PC-3 (cell line): ENCODE measurements at regions of chr3 and their contacts with region 1.

Region 1: GRCh38 chr3:11643605-11644087 is at the start of gene VGLL4:
- DNase-seq: peak; percentile 86
- ATAC-seq: peak; percentile 81
- H3K4me3 ChIP-seq: peak within 1 kb of the TSS; percentile 84
- H3K27ac ChIP-seq: peak within 1 kb of the TSS; percentile 74
- H3K4me1 ChIP-seq: peaks cover 7% of the 10 kb centered on the region; the same call in 1 of the 2 replicates
- H3K27me3 ChIP-seq: no peaks in the 10 kb centered on the region
- CTCF ChIP-seq: no peak
- total RNA-seq, gene VGLL4: 40.5 and 46.3 TPM in 2 replicates

Region 2: DNA sequence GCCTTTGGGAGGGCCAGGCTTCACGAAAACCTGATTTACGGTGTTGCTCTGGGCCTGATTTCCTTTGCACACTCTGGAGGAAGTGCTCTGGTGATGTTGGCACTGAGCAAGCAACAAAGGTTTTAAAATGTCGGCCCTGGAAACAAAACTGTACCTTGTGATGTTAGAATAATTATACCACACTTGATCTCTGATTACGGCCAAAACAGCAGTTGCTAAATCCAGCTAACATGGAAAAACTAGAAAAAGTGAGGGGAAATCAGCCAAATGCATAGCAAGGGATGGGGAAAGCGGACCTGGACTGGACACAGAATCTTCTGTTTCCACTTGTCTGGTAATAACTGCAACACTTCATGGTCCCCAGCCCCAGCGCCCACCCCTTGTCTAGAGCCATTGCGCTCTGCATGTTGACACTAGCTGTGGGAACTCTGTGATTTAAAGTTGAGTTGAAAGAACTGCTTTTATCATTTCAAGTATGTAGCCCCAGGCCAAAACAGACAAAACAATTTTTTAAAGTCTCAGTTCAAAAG is 120.0 kb before region 1 on chr3:
- CTCF ChIA-PET with region 1: no interaction called
- POLR2A ChIA-PET with region 1: no interaction called
- intact Hi-C with region 1: loop called (anchors 5 kb)
- DNase-seq: no peak
- ATAC-seq: no peak
- H3K4me3 ChIP-seq: no peak overlapping the region
- H3K27ac ChIP-seq: peak overlapping the region; percentile 91
- H3K4me1 ChIP-seq: peaks cover 34% of the 10 kb centered on the region
- H3K27me3 ChIP-seq: no peaks in the 10 kb centered on the region
- CTCF ChIP-seq: no peak

Region 3: DNA sequence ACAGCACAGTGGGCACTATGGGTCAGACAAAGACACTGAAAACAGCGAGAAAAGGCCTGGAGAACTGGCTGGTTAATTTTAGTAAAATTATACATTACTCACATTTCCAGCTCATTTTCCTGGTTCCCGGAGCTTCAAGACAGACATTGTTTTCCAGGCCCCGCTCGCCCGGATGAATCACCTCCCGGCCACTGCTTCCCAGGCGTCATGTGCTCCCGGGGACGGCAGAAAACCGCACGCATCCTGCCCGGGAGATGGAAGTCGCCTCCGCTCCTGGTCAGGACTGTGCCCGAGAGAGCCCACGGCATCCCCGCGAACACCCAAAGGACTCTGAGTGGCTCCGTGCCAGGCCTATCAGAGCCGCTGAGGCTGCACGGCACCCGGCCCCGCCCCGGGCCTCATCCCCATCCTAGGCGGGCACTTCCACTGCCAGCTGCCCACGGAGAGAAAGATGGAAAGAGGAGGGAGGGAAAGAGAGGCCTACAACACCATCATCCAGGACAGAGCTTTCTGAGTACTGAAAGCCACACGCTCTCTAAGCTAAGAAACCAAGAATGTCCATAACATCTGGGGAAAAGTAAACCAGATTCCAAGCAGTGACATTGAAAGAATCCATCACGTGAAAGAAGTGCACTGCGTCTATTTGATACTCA is 75.0 kb before region 1 on chr3:
- CTCF ChIA-PET with region 1: no interaction called
- POLR2A ChIA-PET with region 1: interaction called, 12 read pairs
- intact Hi-C with region 1: loop called (anchors 2 kb)
- DNase-seq: peak; percentile 93
- ATAC-seq: peak; percentile 86
- H3K4me3 ChIP-seq: peak overlapping the region; percentile 54
- H3K27ac ChIP-seq: peak overlapping the region; percentile 99
- H3K4me1 ChIP-seq: peaks cover 47% of the 10 kb centered on the region
- H3K27me3 ChIP-seq: no peaks in the 10 kb centered on the region
- CTCF ChIP-seq: no peak

Region 4: DNA sequence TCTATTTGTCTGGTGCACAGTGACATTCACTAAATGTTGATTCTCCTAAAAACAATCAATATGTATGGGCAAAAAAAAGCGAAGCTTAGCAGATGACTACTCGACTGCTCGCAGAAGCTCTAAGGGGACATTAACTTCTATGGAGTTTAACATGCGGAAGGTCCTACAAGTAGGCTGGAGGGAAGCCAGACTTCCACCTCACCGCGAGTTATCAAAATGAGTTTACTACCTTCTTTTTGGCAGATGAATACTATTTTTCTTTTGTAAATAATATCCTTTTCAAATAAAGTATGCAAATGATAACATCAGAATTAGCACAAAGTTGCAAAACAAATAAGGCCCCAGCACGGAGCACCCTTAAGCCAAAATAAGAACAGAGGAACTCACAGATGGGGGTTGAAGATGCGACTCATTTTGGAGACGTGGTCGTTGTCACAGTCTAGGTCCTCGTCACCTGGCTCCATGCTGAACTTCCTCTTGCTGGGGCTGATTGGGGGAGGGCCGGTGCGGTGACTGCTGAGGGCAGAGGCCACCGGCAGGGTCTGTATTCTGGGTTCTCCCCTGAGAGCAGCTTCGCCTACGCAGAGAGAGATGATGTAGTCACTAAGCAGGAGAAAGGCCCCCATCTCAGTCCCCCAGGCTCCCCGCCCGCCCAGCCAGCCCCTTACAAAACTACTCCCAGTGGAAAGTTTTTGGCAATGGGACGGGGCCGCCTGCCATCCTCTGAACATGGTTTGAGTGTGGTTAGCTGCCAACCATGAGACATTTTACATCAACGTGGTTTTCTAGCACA is 42.0 kb before region 1 on chr3:
- CTCF ChIA-PET with region 1: interaction called, 3 read pairs
- POLR2A ChIA-PET with region 1: interaction called, 5 read pairs
- intact Hi-C with region 1: loop called (anchors 1 kb)
- DNase-seq: peak; percentile 51
- ATAC-seq: peak; percentile 1; the same call in 1 of the 2 replicates
- H3K4me3 ChIP-seq: 0 out of 2 replicates have a peak overlapping the region, but pooled peaks have one; percentile 10
- H3K27ac ChIP-seq: peak overlapping the region; percentile 88
- H3K4me1 ChIP-seq: peaks cover 42% of the 10 kb centered on the region
- H3K27me3 ChIP-seq: no peaks in the 10 kb centered on the region
- CTCF ChIP-seq: no peak

Region 5: GRCh38 chr3:11820531-11821041 is 176.9 kb after region 1 on chr3:
- CTCF ChIA-PET with region 1: no interaction called
- POLR2A ChIA-PET with region 1: no interaction called
- intact Hi-C with region 1: no loop called
- DNase-seq: no peak
- ATAC-seq: peak; percentile 52
- H3K4me3 ChIP-seq: no peak overlapping the region
- H3K27ac ChIP-seq: no peak overlapping the region
- H3K4me1 ChIP-seq: peaks cover 4% of the 10 kb centered on the region; the same call in 1 of the 2 replicates
- H3K27me3 ChIP-seq: no peaks in the 10 kb centered on the region
- CTCF ChIP-seq: peak; percentile 27; the same call in 1 of the 2 replicates